ENCODE measurements at regions of chr2 and their contacts with region 1.

Region 1: DNA sequence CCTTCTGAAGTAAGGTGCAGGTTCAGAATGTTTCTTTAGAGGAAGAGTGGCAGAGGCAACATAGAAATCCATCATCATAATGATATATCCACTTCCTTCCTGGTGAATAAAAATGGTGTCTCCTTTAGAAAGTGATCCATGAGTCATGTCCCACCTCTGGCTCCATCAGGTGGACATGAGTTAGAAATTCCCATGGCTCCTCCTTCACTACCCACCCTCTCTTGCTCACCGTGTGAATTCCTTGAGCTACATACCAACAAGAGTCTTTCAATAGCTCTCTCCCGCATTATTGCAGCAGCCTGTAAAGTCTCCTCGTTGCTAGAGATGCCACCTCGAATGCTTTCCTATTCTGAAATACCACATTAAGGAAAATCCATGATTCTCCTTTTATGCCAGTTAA is 317.6 kb downstream of the LNPK start:
- DNase-seq: no peak
- ATAC-seq: no peak

Region 2: GRCh38 chr2:175807031-175807873 is 122.8 kb after region 1 on chr2:
- intact Hi-C with region 1: no loop called
- DNase-seq: no peak
- ATAC-seq: no peak

Region 3: GRCh38 chr2:176088048-176088936 is 403.8 kb after region 1 on chr2:
- intact Hi-C with region 1: loop called (anchors 10 kb)
- DNase-seq: no peak
- ATAC-seq: peak; percentile 75

Measured in sciatic nerve (tissue), 2 donors.